Common myeloid progenitor, CD34-positive (primary cell): ENCODE measurements at regions of chr2 and their contacts with region 1.

Region 1: GRCh38 chr2:43178602-43179542 is 47.5 kb downstream of the ZFP36L2 start:
- DNase-seq: peak in 2 of 3 donors; percentile 73 to 85
- H3K4me3 ChIP-seq: peak overlapping the region in 3 of 7 experiments; percentile 13 to 41 (median 33)
- H3K27ac ChIP-seq: peak overlapping the region; percentile 72 to 89
- H3K4me1 ChIP-seq: peaks cover 2 to 28% (median 23%) of the 10 kb centered on the region in 4 experiments
- H3K27me3 ChIP-seq: no peaks in the 10 kb centered on the region

Region 2: GRCh38 chr2:43194121-43194869 is 15.4 kb after region 1 on chr2:
- CTCF ChIA-PET with region 1: interaction called, 11 read pairs
- POLR2A ChIA-PET with region 1: interaction called, 3 read pairs
- DNase-seq: peak in 1 of 3 donors; percentile 33
- H3K4me3 ChIP-seq: peak overlapping the region in 2 of 7 experiments; percentile 20 to 55
- H3K27ac ChIP-seq: peak overlapping the region in 1 of 2 experiments; percentile 82
- H3K4me1 ChIP-seq: peaks cover 15 to 76% (median 52%) of the 10 kb centered on the region in 4 experiments
- H3K27me3 ChIP-seq: no peaks in the 10 kb centered on the region